PC-3 (cell line): ENCODE measurements at regions of chr3 and their contacts with region 1.

Region 1: GRCh38 chr3:179768080-179768479 is 115.2 kb downstream of the USP13 start:
- DNase-seq: peak; percentile 90
- ATAC-seq: peak; percentile 83
- H3K4me3 ChIP-seq: no peak overlapping the region
- H3K27ac ChIP-seq: no peak overlapping the region
- H3K4me1 ChIP-seq: peaks cover 18% of the 10 kb centered on the region
- H3K27me3 ChIP-seq: no peaks in the 10 kb centered on the region
- CTCF ChIP-seq: peak; percentile 87

Region 2: DNA sequence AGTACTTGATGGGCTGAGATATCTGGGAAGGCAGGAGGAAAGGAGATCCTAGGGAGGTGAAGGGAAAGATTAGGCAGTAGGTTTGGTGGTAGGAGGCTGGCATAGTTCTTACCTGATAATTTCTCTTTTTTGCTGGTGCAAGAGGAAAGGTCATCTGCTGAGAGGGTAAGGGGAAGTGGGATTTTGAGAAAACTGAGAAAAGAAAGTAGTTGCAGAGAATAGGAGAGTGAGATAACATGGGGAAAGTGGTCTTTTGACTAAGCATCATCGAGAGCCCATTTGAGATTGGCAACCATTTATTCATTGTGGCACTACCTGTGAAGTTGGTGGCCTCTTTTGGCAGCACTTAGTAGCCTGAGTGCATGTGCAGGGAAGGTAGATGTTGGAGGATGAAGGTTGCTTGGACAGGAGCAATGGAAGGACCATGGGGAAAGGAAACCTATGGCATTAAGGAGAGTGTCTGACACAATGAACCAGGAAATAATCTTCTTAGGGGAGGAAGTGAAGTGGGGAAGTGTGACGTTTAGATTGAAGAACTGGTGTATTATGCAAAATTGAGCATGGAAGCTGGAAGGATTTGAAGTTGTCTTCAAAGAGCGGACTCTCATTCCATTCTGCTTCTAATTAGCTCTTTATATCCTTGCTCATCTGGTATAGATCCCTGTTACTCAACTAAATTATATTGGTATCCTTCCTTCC is 137.2 kb before region 1 on chr3:
- CTCF ChIA-PET with region 1: no interaction called
- POLR2A ChIA-PET with region 1: no interaction called
- intact Hi-C with region 1: no loop called
- DNase-seq: no peak
- ATAC-seq: no peak
- H3K4me3 ChIP-seq: no peak overlapping the region
- H3K27ac ChIP-seq: no peak overlapping the region
- H3K4me1 ChIP-seq: no peaks in the 10 kb centered on the region
- H3K27me3 ChIP-seq: no peaks in the 10 kb centered on the region
- CTCF ChIP-seq: no peak

Region 3: DNA sequence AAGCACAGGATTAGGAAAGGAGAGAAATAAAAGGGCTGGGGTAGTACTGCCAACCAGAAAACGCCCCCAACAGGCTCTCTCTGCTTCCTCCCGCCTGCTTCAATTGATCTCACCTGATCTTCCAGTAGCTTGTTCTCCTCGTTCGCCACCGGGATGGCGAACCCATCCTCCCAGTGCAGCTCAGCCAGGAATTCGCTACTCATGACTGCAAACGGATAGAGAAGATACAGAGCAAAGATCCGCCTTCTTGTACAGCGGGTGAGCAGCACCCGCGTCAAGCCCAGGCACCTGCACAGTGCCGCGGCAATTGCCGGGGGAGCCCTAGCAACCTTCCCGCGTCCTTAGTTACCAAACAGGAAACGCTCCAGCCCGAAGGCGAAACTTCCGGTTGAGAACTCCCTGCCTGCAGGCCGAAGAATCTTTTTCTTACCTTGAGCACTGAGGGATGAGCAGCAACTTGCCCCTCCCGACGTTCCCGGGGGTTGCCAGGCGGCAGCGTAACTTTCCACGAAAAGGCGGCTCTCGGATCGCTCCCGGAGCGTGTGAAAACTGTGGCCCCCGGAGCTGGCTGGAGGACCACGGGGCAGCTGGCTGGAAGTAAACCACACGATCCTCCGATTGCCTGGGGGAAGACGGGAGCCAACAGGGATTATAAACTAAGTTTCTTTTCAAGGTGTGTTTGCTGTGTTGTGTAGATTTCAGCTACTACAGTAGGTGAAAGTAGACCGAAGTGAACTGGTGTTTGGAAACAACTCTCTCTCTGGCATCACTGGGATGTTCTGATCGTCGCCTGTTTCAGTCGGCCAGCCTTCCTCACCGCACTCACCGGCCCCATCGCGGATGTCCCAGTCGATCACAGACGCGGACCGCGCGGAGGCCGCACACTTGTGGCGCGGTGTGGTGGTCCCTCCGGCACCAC is 911.4 kb after region 1 on chr3 and contains the start of gene CCDC39:
- CTCF ChIA-PET with region 1: no interaction called
- POLR2A ChIA-PET with region 1: no interaction called
- intact Hi-C with region 1: loop called (anchors 5 kb)
- DNase-seq: peak; percentile 88
- ATAC-seq: peak; percentile 87
- H3K4me3 ChIP-seq: peak within 1 kb of the TSS; percentile 86
- H3K27ac ChIP-seq: no peak within 1 kb of the TSS
- H3K4me1 ChIP-seq: peaks cover 6% of the 10 kb centered on the region; the same call in 1 of the 2 replicates
- H3K27me3 ChIP-seq: peaks cover 17% of the 10 kb centered on the region
- CTCF ChIP-seq: no peak
- total RNA-seq, gene CCDC39: 0.04 TPM in 1 of 2 replicates, not detected in the other